Activated CD4-positive, alpha-beta memory T cell treated with anti-CD3 and anti-CD28 coated beads for 36 hours (primary cell): ENCODE measurements at regions of chr4 and their contacts with region 1.

Region 1: GRCh38 chr4:146132445-146132844 is 43.1 kb upstream of the LSM6 start:
- DNase-seq: peak; percentile 86
- H3K4me3 Mint-ChIP-seq: no peak overlapping the region
- H3K27ac Mint-ChIP-seq: peak overlapping the region; percentile 26
- H3K4me1 Mint-ChIP-seq: peaks cover 17% of the 10 kb centered on the region
- H3K27me3 Mint-ChIP-seq: peaks cover 12% of the 10 kb centered on the region

Region 2: DNA sequence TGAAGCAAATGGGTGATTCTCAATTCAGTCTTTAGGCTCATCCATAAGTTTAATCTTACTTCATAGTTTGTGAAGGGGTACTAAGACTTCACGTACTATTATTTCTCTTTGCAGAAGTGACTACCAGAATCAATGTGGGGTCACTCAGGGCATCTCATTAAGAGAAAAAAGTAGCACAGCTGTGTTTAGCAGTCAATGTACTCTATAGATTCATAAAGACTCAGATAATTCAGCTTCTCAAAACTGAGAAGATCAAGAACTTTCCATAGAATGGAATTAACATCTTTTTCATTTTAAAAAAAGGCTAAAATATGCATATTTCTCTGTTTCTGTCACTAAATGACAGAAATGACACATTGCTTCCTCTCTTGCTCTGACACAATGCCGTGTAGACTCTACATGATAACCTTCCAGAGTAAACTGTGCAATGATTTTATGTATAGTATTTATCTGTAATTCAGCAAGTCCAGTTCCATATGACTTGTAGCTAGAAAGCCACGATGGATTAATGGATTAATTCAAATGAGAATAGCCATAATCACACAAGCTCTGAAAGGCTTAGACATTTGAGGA is 22.8 kb after region 1 on chr4:
- CTCF ChIA-PET with region 1: no interaction called
- POLR2A ChIA-PET with region 1: no interaction called
- intact Hi-C with region 1: loop called (anchors 1 kb)
- DNase-seq: no peak
- H3K4me3 Mint-ChIP-seq: no peak overlapping the region
- H3K27ac Mint-ChIP-seq: no peak overlapping the region
- H3K4me1 Mint-ChIP-seq: peaks cover 8% of the 10 kb centered on the region
- H3K27me3 Mint-ChIP-seq: peaks cover 19% of the 10 kb centered on the region

Region 3: DNA sequence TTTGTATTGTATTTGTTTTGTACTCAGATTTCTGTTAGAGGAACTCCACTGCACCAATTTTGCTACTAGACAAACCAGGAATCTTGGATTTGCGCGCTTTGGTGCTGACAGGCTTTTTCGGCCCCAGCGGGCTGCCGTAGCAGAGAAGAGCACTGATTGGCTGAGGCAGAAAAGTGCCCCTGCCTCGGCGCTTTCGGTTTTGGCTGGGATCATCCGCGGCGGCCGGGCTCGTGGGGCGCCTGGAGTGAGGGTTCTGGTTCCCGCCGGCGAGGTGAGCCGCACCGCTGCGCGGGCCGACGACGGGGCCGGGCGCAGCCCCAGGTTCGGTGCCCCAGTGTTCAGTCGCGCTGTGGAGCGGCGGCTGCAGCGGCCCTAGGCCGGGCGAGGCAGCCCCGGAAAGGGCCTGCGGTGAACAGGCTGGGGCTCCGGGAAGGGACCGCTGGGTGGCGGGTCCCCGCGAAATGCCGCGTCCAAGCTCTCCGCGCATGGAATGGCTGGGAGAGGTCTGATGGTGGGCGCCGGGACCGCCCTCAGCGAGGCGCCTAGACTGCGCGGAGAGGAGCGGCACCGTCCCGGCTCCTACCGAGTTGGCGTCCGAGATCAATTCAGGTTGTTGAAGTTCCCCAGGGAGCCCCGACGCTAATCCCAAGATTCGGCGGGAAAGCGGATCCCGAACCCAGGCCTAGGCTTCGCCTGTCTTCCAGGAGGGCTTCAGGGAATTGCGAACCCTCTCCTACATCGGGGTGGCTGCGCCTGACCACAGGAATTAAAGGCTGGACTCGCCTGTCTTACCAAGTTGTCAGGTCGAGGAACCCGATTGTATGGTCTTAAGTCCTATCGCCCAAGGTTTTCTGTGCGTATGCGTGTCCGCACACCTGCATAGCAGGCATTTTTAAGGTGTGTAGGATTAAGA is 43.4 kb after region 1 on chr4 and contains the start of gene LSM6:
- CTCF ChIA-PET with region 1: no interaction called
- POLR2A ChIA-PET with region 1: no interaction called
- intact Hi-C with region 1: loop called (anchors 1 kb)
- DNase-seq: peak; percentile 89
- H3K4me3 Mint-ChIP-seq: peak within 1 kb of the TSS; percentile 83
- H3K27ac Mint-ChIP-seq: peak within 1 kb of the TSS; percentile 87
- H3K4me1 Mint-ChIP-seq: peaks cover 42% of the 10 kb centered on the region
- H3K27me3 Mint-ChIP-seq: no peaks in the 10 kb centered on the region
- total RNA-seq, gene LSM6: 64.2 to 65.5 TPM